Activated CD4-positive, alpha-beta memory T cell treated with anti-CD3 and anti-CD28 coated beads for 36 hours (primary cell): ENCODE measurements at regions of chr1 and their contacts with region 1.

Region 1: GRCh38 chr1:206575165-206575893 is 36.9 kb downstream of the EIF2D start:
- DNase-seq: peak; percentile 67
- H3K4me3 Mint-ChIP-seq: peak overlapping the region; percentile 59
- H3K27ac Mint-ChIP-seq: peak overlapping the region; percentile 99
- H3K4me1 Mint-ChIP-seq: peaks cover 97% of the 10 kb centered on the region
- H3K27me3 Mint-ChIP-seq: no peaks in the 10 kb centered on the region

Region 2: DNA sequence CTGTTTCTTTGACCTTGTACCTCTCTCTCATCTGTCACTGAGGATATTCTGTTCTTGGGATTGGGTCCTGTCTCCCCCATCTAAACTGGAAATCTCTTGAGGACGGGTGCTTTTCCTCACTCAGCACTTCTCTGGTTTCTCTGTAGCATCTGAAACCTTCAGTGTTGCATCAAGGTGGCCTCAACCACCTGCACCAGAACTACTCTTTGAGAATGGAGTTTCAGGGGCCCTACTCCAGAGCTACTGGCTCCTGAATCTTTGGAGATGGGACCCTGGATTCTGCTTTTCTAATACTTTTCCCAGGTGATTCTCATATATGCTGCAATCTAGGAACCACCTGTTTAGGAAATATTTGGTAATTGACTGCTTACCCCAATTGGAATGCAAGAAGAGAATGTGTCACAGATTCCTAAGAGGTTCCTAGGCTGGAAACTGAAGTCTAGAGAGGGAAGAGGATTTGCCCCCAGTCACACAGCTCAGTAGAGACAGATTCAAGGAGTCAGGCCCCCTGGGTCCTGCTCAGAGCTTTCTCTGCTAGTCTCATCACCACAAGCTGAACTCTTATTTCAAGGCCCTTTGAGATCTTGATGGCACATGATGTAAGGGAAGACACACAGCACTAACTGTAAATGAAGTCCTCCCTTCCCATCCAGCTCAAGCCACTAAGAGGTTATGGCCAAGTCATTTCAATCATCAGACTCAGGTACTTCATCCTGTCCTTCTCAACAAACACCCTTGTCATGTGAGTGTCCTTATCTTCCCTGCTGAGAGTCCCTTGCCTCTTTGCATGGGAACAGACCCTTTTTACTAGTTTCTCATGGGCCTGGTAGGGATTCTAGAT is 11.7 kb before region 1 on chr1:
- CTCF ChIA-PET with region 1: interaction called, 588 read pairs
- POLR2A ChIA-PET with region 1: interaction called, 546 read pairs
- intact Hi-C with region 1: loop called (anchors 1 kb)
- DNase-seq: no peak
- H3K4me3 Mint-ChIP-seq: peak overlapping the region; percentile 72
- H3K27ac Mint-ChIP-seq: peak overlapping the region; percentile 99
- H3K4me1 Mint-ChIP-seq: peaks cover 86% of the 10 kb centered on the region
- H3K27me3 Mint-ChIP-seq: no peaks in the 10 kb centered on the region

Region 3: DNA sequence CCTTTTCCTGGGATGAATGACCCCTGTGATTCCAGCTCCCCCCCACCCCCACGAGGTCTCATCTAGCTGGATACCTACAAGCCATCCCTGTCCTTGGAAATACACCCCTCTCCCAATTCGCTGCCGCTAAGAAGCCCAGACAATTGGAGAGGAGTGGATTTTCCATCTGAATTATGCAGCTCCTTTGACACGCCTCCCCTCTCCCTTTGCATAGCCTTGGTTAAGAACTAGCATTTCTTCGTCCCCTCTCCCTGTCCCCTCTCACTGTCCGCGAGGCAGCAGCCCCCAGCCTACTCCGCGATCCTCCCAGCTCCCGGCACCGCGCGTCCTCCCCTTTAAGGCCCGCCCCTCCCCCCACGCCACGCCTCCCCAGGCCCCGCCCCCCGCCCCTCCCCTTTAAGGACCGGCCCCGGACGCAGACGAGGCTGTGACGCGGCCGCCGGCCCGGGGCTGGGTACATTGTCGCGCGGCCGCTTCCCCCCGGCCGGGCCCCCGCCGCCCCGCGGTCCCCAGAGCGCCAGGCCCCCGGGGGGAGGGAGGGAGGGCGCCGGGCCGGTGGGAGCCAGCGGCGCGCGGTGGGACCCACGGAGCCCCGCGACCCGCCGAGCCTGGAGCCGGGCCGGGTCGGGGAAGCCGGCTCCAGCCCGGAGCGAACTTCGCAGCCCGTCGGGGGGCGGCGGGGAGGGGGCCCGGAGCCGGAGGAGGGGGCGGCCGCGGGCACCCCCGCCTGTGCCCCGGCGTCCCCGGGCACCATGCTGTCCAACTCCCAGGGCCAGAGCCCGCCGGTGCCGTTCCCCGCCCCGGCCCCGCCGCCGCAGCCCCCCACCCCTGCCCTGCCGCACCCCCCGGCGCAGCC is 109.4 kb after region 1 on chr1 and contains the start of gene MAPKAPK2:
- CTCF ChIA-PET with region 1: no interaction called
- POLR2A ChIA-PET with region 1: no interaction called
- intact Hi-C with region 1: no loop called
- DNase-seq: peak; percentile 83
- H3K4me3 Mint-ChIP-seq: peak within 1 kb of the TSS; percentile 90
- H3K27ac Mint-ChIP-seq: peak within 1 kb of the TSS; percentile 95
- H3K4me1 Mint-ChIP-seq: peaks cover 58% of the 10 kb centered on the region
- H3K27me3 Mint-ChIP-seq: peaks cover 1% of the 10 kb centered on the region
- total RNA-seq, gene MAPKAPK2: 96.9 to 97.4 TPM

Region 4: GRCh38 chr1:206734499-206735142 is 159.3 kb after region 1 on chr1:
- CTCF ChIA-PET with region 1: no interaction called
- POLR2A ChIA-PET with region 1: no interaction called
- intact Hi-C with region 1: no loop called
- DNase-seq: peak; percentile 85
- H3K4me3 Mint-ChIP-seq: no peak overlapping the region
- H3K27ac Mint-ChIP-seq: peak overlapping the region; percentile 16
- H3K4me1 Mint-ChIP-seq: peaks cover 57% of the 10 kb centered on the region
- H3K27me3 Mint-ChIP-seq: no peaks in the 10 kb centered on the region